ENCODE measurements at regions of chr19 and their contacts with region 1.

Region 1: GRCh38 chr19:50556282-50557008 is 11.8 kb downstream of the LRRC4B start:
- DNase-seq: peak; percentile 49
- ATAC-seq: peak; percentile 92
- H3K4me3 ChIP-seq: peak overlapping the region; percentile 58 to 68
- H3K27ac ChIP-seq: peak overlapping the region; percentile 80
- H3K4me1 ChIP-seq: peaks cover 10 to 19% of the 10 kb centered on the region in 2 experiments; a peak in 3 of 4 replicates
- H3K27me3 ChIP-seq: no peaks in the 10 kb centered on the region
- CTCF ChIP-seq: peak; percentile 96 to 99 (median 99)
- POLR2A ChIP-seq: no peak
- RAD21 ChIP-seq: peak; percentile 50

Region 2: DNA sequence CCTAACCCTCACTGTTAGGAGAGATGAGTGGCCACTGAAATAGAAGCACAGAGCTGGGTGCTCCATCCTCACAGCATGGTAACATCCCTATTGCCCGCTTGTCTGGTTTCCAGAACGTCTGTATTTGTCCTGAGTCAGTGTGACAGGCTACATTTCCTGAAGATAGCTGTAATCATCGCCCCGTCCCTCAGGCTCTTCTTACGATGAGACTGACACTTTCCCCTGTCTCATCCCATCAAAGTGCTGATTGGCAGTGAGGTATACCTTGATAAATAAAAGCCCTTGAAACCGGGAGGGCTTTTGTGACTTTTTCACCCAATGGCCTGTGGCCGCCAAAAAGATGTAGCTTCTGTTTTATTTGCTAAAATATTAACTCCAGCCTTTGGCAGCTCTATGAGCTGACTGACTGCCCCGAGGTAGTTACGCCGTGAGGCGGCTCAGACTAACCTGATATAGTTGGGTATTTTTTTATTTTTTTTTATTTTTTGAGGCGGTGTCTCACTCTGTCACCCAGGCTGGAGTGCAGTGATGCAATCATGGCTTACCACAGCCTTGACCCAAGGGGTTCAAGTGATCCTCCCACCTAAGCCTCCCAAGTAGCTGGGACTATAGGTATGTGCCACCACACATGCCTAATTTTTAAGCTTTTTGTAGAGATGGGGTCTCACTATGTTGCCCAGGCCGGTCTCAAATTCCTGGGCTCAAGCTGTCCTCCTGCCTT is 17.5 kb after region 1 on chr19:
- CTCF ChIA-PET with region 1: interaction called, 14 read pairs
- POLR2A ChIA-PET with region 1: no interaction called
- RAD21 ChIA-PET with region 1: no interaction called
- intact Hi-C with region 1: no loop called
- DNase-seq: no peak
- ATAC-seq: no peak
- H3K4me3 ChIP-seq: no peak overlapping the region
- H3K27ac ChIP-seq: no peak overlapping the region
- H3K4me1 ChIP-seq: no peaks in the 10 kb centered on the region
- H3K27me3 ChIP-seq: no peaks in the 10 kb centered on the region
- CTCF ChIP-seq: no peak
- POLR2A ChIP-seq: no peak
- RAD21 ChIP-seq: no peak

Region 3: DNA sequence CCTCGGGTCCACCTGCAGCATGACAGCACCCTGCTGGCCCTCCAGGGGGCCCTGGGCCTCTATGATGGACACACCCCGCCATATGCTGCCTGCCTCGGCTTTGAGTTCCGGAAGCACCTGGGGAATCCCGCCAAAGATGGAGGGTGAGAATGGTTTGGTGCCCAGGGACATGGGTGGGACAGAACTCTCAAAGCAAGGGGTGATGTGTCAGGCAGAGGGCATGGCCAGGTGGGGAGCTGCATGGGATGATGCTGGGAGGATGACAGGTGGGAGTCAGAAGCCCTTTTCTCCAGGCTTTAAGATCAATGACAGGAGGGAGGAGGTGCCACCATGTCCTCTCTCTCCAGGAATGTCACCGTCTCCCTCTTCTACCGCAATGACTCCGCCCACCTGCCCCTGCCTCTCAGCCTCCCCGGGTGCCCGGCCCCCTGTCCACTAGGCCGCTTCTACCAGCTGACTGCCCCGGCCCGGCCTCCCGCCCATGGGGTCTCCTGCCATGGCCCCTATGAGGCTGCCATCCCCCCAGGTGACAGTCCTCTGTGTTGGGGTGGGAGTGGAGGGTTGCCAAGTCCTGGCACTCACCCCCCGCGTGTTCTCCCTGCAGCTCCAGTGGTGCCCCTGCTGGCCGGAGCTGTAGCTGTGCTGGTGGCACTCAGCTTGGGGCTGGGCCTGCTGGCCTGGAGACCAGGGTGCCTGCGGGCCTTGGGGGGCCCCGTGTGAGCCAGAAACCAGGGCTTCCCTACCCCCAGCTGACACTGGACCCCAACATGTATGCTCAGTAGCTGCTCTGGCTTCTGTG is 238.2 kb after region 1 on chr19:
- CTCF ChIA-PET with region 1: no interaction called
- POLR2A ChIA-PET with region 1: no interaction called
- RAD21 ChIA-PET with region 1: no interaction called
- intact Hi-C with region 1: no loop called
- DNase-seq: no peak
- ATAC-seq: peak; percentile 61
- H3K4me3 ChIP-seq: no peak overlapping the region
- H3K27ac ChIP-seq: peak overlapping the region; percentile 40
- H3K4me1 ChIP-seq: peaks cover 11 to 32% of the 10 kb centered on the region in 2 experiments; a peak in 3 of 4 replicates
- H3K27me3 ChIP-seq: no peaks in the 10 kb centered on the region
- CTCF ChIP-seq: peak in 2 of 3 experiments; percentile 64 to 78; a peak in 4 of 6 replicates
- POLR2A ChIP-seq: peak; percentile 54
- RAD21 ChIP-seq: peak; percentile 46; the same call in 1 of the 2 replicates

Measured in HCT116 (cell line).